Pancreas (tissue), 10 donors: ENCODE measurements at regions of chr12 and their contacts with region 1.

Region 1: DNA sequence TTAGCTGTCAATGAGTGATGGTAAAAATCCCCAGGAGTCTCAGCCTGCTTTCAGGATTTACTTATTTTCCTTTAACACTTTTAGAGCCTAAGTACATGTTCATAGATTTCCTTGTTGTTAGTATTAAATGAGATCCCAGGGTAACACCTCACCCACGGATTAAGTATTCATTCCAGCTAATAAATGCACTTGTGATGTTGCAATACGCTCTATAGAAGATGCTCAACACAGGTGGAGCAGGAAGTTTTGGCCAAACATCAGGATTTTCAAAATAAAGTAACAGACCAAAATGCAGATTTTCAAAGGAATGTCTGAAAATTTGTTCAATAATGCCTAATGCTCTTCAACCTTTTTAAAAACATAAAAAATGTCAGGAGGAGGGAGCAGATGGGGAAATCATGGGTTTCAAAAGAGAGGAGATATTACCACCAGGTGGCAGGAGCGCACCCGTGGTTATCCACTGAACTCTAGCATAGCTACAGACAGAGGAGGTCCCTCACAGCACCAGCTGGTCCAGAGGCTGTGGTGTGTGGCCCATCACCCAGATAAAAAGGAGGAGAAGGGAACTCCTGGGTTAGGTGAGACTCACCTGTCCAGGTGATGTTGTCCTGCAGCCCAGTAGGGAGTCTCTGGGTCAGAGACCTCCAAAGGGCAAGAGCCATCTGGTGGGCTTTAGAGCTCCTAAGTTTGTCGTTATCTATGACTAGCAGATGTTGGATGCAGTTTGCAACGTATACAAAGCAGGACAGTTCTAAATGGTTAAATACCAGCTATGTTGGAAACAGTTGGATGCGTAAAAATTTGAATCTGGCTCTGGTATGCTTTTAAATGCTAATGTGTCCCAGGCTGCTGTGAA is 1158.4 kb upstream of the TMEM132C start:
- DNase-seq: peak in 5 of 6 donors; percentile 9 to 64 (median 35)
- ATAC-seq: peak; percentile 43 to 88 (median 82)
- H3K4me3 ChIP-seq: no peak overlapping the region
- H3K27ac ChIP-seq: no peak overlapping the region
- H3K4me1 ChIP-seq: no peaks in the 10 kb centered on the region
- H3K27me3 ChIP-seq: no peaks in the 10 kb centered on the region
- CTCF ChIP-seq: peak in 3 of 4 donors; percentile 37 to 50 (median 44)

Region 2: GRCh38 chr12:127381048-127381668 is 272.6 kb after region 1 on chr12:
- intact Hi-C with region 1: loop called in 1 of 3 experiments (anchors 10 kb)
- DNase-seq: peak in 5 of 6 donors; percentile 7 to 80 (median 35)
- ATAC-seq: peak in 3 of 4 donors; percentile 82 to 84 (median 83)
- H3K4me3 ChIP-seq: peak overlapping the region in 1 of 4 donors; percentile 10
- H3K27ac ChIP-seq: no peak overlapping the region
- H3K4me1 ChIP-seq: peaks cover 0 to 4% (median 0%) of the 10 kb centered on the region in 3 donors
- H3K27me3 ChIP-seq: peaks cover 0 to 10% (median 0%) of the 10 kb centered on the region in 4 donors
- CTCF ChIP-seq: peak; percentile 66 to 77 (median 70)